ENCODE measurements at regions of chr12 and their contacts with region 1.

Region 1: DNA sequence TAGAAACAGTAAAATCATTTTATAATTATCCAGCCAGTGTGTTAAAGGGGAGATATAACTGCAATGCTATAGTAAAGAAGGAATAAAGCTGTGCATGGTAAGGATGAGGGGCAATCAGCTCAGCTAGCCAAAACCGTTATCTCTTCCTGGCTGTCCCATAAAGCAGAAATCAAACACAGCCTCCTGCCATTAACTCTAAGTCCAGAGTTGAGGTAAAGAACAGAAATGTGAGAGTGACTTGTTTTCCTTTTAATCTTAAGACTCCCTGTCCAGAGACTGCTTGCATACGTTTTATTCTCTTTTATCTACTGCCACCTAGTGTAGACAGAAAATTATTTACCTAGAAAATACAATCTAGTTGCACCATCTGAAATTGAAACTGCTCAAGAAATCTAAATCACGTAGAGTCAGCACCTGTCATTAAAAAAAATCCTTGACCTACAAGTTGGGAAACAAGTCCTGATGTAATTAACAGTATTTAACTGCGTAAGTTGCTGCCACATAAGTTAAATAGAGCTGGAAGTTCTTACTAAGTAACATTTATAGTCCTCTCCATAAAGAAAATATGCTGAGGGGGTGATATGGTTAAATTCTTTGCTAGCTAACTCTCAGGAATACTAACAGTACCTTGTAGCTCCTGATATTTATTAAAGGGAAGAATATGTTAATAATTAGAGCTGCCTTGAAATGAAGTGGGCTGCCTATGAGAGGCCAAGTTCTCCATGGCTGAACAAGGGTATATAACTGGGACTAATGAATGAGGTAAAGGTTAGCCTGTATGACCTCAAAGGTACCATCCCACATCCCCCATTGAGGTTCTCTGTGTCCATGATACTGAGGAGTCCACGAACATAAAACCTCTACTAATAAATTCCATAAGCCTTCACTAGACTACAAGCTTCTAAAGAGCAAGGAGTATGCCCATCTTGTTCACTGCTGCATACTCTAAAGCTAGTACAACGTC is 62.7 kb downstream of the GALNT4 start:
- DNase-seq: no peak
- H3K4me3 ChIP-seq: no peak overlapping the region
- H3K27ac ChIP-seq: no peak overlapping the region
- H3K4me1 ChIP-seq: no peaks in the 10 kb centered on the region
- H3K27me3 ChIP-seq: no peaks in the 10 kb centered on the region
- CTCF ChIP-seq: peak in 3 of 4 experiments; percentile 75 to 86 (median 81)
- POLR2A ChIP-seq: no peak

Region 2: GRCh38 chr12:89019408-89020120 is 442.4 kb before region 1 on chr12:
- intact Hi-C with region 1: loop called (anchors 5 kb)
- DNase-seq: peak; percentile 71
- H3K4me3 ChIP-seq: no peak overlapping the region
- H3K27ac ChIP-seq: no peak overlapping the region
- H3K4me1 ChIP-seq: no peaks in the 10 kb centered on the region
- H3K27me3 ChIP-seq: no peaks in the 10 kb centered on the region
- CTCF ChIP-seq: peak; percentile 48 to 79 (median 60)
- POLR2A ChIP-seq: no peak

Region 3: DNA sequence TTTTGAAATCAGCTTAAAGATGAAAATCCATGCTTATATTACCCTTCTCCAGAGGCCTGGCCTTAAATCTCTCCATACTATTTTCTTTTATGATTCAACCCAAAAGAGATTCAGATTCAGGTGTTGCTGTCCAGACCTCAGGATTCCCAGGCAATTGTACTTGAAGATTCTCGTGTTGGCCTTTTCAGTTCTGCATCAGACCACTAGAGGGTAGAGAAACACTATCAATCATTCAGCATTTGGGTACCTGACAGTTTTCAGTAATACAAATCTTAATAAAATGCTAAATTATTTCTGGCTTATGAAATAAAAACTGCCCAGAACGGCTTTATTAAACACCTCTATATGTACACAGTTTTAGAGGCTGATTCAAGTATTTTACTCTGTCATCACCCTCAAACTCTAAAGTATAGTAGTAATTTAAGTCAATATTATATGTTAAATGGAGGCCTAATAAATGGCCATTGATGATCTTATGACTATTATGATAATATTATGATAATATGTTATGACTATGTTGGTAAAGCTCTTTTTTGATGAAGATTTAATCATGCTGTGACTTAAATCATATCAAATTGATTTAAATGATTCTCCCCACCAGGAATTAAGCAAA is 410.8 kb before region 1 on chr12:
- intact Hi-C with region 1: loop called (anchors 2 kb)
- DNase-seq: peak; percentile 40
- H3K4me3 ChIP-seq: no peak overlapping the region
- H3K27ac ChIP-seq: no peak overlapping the region
- H3K4me1 ChIP-seq: no peaks in the 10 kb centered on the region
- H3K27me3 ChIP-seq: no peaks in the 10 kb centered on the region
- CTCF ChIP-seq: peak; percentile 65 to 92 (median 86)
- POLR2A ChIP-seq: no peak

Region 4: GRCh38 chr12:89140602-89141238 is 321.2 kb before region 1 on chr12:
- intact Hi-C with region 1: no loop called
- DNase-seq: no peak
- H3K4me3 ChIP-seq: no peak overlapping the region
- H3K27ac ChIP-seq: no peak overlapping the region
- H3K4me1 ChIP-seq: peaks cover 5% of the 10 kb centered on the region
- H3K27me3 ChIP-seq: no peaks in the 10 kb centered on the region
- CTCF ChIP-seq: no peak
- POLR2A ChIP-seq: no peak

Region 5: DNA sequence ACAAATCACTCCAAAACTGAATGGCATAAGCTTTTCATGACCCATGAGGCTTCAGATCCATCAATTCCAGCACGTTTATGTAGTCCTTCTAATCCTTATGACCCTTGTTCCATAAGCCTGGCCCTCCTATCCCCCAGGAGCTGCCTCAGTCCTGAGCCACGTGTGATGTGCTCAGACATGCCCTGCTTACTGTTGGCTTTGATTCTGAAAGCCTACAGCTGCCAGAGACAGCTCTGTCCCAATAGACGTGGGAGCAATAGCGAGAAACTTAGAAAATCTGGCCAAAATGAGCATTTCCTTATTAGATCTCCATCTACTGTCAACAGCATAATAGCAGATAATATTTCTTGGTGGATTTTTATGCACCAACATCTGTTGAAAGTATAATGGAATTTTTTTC is 142.8 kb before region 1 on chr12:
- intact Hi-C with region 1: no loop called
- DNase-seq: peak; percentile 23
- H3K4me3 ChIP-seq: no peak overlapping the region
- H3K27ac ChIP-seq: no peak overlapping the region
- H3K4me1 ChIP-seq: no peaks in the 10 kb centered on the region
- H3K27me3 ChIP-seq: no peaks in the 10 kb centered on the region
- CTCF ChIP-seq: no peak
- POLR2A ChIP-seq: no peak

Region 6: GRCh38 chr12:89405626-89406345 is 56.1 kb before region 1 on chr12:
- intact Hi-C with region 1: no loop called
- DNase-seq: no peak
- H3K4me3 ChIP-seq: no peak overlapping the region
- H3K27ac ChIP-seq: no peak overlapping the region
- H3K4me1 ChIP-seq: no peaks in the 10 kb centered on the region
- H3K27me3 ChIP-seq: no peaks in the 10 kb centered on the region
- CTCF ChIP-seq: no peak
- POLR2A ChIP-seq: no peak